ENCODE measurements at regions of chr2 and their contacts with region 1.

Region 1: GRCh38 chr2:7014174-7014640 is 97.0 kb downstream of the RNF144A start:
- DNase-seq: peak; percentile 18
- ATAC-seq: peak; percentile 87
- H3K4me3 ChIP-seq: no peak overlapping the region
- H3K27ac ChIP-seq: no peak overlapping the region
- H3K4me1 ChIP-seq: no peaks in the 10 kb centered on the region
- H3K27me3 ChIP-seq: no peaks in the 10 kb centered on the region
- CTCF ChIP-seq: peak; percentile 42 to 72 (median 66); a peak in 5 of 6 replicates
- POLR2A ChIP-seq: no peak
- RAD21 ChIP-seq: peak; percentile 44

Region 2: GRCh38 chr2:6648596-6649247 is 365.5 kb before region 1 on chr2:
- CTCF ChIA-PET with region 1: no interaction called
- POLR2A ChIA-PET with region 1: no interaction called
- RAD21 ChIA-PET with region 1: no interaction called
- intact Hi-C with region 1: no loop called
- DNase-seq: no peak
- ATAC-seq: no peak
- H3K4me3 ChIP-seq: no peak overlapping the region
- H3K27ac ChIP-seq: no peak overlapping the region
- H3K4me1 ChIP-seq: no peaks in the 10 kb centered on the region
- H3K27me3 ChIP-seq: peaks cover 4% of the 10 kb centered on the region; the same call in 1 of the 2 replicates
- CTCF ChIP-seq: no peak
- POLR2A ChIP-seq: no peak
- RAD21 ChIP-seq: no peak

Region 3: DNA sequence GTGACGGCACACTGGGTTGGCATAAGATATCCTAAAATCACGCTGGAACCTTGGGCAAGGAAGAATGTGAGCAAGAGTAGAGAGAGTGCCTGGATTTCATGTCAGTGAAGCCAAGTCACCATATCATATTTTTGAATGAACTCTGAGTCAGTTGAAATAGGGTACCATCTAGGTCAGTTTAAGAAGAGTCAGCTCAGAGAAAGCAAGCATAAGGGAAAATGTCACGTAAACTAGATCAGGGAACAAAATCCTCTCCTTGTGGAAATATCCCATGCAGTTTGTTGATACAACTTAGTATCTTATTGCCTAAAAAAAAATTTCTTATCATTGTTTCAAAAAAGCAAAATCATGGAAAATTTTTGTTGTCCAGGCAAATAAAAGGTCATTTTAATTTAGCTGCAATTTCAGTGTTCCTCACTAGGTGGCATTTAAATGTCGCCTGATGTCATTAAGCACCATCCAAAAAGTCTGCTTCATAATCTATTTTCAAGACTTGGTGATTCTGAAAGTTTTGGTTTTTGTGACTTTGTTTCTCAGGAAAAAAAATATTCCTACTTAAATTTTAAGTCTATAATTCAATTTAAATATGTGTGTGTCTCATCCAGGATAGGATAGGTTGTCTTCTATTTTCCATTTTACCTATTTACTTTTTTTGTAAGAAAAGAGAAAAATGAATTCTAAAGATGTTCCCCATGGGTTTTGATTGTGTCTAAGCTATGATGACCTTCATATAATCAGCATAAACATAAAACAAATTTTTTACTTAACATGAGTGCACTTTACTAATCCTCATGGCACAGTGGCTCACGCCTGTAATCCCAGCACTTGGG is 117.1 kb before region 1 on chr2:
- CTCF ChIA-PET with region 1: interaction called, 10 read pairs
- POLR2A ChIA-PET with region 1: no interaction called
- RAD21 ChIA-PET with region 1: no interaction called
- intact Hi-C with region 1: no loop called
- DNase-seq: peak; percentile 26
- ATAC-seq: 0 out of 2 replicates have a peak, but pooled peaks have one; percentile 53
- H3K4me3 ChIP-seq: no peak overlapping the region
- H3K27ac ChIP-seq: no peak overlapping the region
- H3K4me1 ChIP-seq: no peaks in the 10 kb centered on the region
- H3K27me3 ChIP-seq: peaks cover 5% of the 10 kb centered on the region; the same call in 1 of the 2 replicates
- CTCF ChIP-seq: peak; percentile 47 to 80 (median 59); a peak in 5 of 6 replicates
- POLR2A ChIP-seq: no peak
- RAD21 ChIP-seq: peak; percentile 81

Region 4: DNA sequence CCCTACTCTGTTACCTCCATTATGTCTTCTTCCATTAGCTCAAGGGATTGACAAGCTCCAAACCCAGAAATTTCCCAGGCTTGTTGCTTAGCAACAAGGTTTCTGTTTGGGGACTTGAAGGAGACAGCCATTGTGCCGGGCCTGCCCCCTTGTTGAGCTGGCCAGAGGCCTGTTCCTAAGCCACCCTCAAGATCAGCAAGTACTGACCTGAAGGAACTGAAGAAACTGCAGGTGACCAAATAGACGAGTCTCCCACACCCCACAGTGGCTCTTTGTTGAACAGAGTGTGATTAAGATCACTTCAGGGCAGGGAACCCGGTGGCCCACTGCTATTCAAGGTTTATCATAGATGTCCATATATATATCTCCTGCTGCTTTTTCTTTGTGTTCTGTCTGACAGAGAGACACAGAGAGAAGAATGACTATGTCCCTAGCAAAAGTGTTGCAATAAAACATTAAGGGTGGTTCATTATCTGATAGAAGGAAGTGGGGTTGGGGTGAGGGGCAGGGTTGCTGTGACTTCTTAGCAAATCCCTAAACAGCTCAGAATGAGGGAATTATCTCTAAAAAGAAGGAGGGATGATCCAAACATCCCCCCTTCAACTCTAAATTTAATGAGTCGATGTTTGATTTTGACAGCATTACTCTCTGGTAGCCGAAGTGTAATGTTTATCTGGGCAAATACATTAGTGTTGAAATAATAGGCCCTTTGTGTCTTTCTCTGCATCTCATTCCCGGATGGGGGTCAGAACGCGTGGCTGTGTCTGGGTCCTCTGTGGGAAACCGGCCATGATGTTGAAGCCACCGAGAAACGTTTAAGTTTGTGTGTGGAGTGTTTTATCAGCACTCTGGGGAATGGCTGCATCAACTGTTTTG is 27.7 kb before region 1 on chr2:
- CTCF ChIA-PET with region 1: no interaction called
- POLR2A ChIA-PET with region 1: no interaction called
- RAD21 ChIA-PET with region 1: no interaction called
- intact Hi-C with region 1: no loop called
- DNase-seq: no peak
- ATAC-seq: no peak
- H3K4me3 ChIP-seq: no peak overlapping the region
- H3K27ac ChIP-seq: no peak overlapping the region
- H3K4me1 ChIP-seq: no peaks in the 10 kb centered on the region
- H3K27me3 ChIP-seq: no peaks in the 10 kb centered on the region
- CTCF ChIP-seq: no peak
- POLR2A ChIP-seq: no peak
- RAD21 ChIP-seq: no peak

Region 5: GRCh38 chr2:7523481-7524120 is 509.4 kb after region 1 on chr2:
- CTCF ChIA-PET with region 1: no interaction called
- POLR2A ChIA-PET with region 1: no interaction called
- RAD21 ChIA-PET with region 1: no interaction called
- intact Hi-C with region 1: no loop called
- DNase-seq: no peak
- ATAC-seq: no peak
- H3K4me3 ChIP-seq: no peak overlapping the region
- H3K27ac ChIP-seq: no peak overlapping the region
- H3K4me1 ChIP-seq: no peaks in the 10 kb centered on the region
- H3K27me3 ChIP-seq: no peaks in the 10 kb centered on the region
- CTCF ChIP-seq: no peak
- POLR2A ChIP-seq: no peak
- RAD21 ChIP-seq: no peak